Lower leg skin (tissue), 4 donors: ENCODE measurements at regions of chr2 and their contacts with region 1.

Region 1: GRCh38 chr2:204491528-204491927 is 53.7 kb upstream of the PARD3B start:
- DNase-seq: no peak
- H3K4me3 ChIP-seq: no peak overlapping the region
- CTCF ChIP-seq: no peak
- POLR2A ChIP-seq: no peak

Region 2: DNA sequence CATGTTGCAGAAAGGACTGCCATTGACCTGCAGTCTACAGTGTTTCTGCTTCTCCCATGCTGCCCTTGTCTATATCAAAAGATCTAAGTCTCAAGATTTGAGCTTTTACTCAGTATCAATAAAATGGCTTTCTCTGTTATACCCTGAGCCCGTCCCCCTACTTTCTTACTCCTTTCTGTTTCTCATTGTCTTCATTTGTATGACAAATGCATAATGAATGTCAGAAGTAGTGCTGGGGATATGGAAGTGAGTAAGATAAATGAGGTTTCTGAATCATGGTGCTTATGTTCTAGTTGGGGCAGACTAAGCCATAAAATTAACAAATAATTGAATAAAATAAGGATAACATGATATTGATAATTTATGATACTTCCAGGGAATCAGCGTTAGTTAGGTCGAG is 182.3 kb after region 1 on chr2:
- intact Hi-C with region 1: loop called (anchors 5 kb)
- DNase-seq: no peak
- H3K4me3 ChIP-seq: no peak overlapping the region
- CTCF ChIP-seq: no peak
- POLR2A ChIP-seq: no peak